ENCODE measurements at regions of chr7 and their contacts with region 1.

Region 1: DNA sequence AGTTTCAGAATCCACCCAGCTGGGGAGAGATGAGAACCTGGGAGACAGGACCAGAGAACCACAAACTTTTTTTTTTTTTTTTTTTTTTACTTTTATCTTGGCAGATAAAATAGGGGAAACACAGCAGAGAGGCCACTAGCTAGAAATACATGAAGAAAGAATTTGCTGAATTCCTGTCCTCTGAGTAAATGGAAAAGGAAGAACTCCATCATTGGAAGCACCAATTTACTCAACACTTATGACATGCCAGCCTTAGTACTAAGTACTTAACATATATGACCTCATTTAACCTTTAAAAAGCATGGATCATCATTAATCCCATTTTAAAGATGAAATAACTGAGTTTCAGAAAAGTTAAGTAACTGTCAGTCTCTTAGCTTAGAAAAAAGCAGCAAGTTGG is 343.0 kb upstream of the NPSR1 start:
- DNase-seq: peak; percentile 47
- H3K4me3 ChIP-seq: no peak overlapping the region
- H3K27ac ChIP-seq: no peak overlapping the region
- H3K4me1 ChIP-seq: no peaks in the 10 kb centered on the region
- H3K27me3 ChIP-seq: no peaks in the 10 kb centered on the region
- CTCF ChIP-seq: no peak

Region 2: DNA sequence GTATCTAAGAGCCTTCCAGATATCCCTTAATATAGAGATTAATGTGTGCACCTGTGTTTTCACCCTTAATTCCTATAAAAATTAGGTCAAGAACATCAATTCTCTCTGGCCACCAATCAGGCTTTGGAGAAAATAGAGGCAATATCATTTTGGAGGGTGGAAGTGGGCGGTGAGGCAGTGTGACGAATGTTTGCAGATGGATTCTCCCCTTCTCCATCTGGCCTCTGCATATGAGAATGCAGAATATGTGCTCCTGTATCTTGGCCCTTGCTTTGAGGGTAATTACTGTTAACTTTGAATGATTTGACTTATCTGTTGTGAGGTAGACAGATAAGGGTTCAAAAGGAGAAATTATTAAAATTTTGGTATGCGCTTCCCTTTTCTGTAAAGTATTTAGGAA is 39.0 kb after region 1 on chr7:
- CTCF ChIA-PET with region 1: no interaction called
- dilution Hi-C with region 1: no loop called
- in situ Hi-C with region 1: no loop called
- intact Hi-C with region 1: no loop called
- DNase-seq: no peak
- H3K4me3 ChIP-seq: no peak overlapping the region
- H3K27ac ChIP-seq: no peak overlapping the region
- H3K4me1 ChIP-seq: peaks cover 31% of the 10 kb centered on the region
- H3K27me3 ChIP-seq: no peaks in the 10 kb centered on the region
- CTCF ChIP-seq: no peak

Region 3: GRCh38 chr7:34425187-34425586 is 110.2 kb after region 1 on chr7:
- CTCF ChIA-PET with region 1: no interaction called
- dilution Hi-C with region 1: no loop called
- in situ Hi-C with region 1: loop called in 1 of 2 experiments (anchors 10 kb)
- intact Hi-C with region 1: no loop called
- DNase-seq: no peak
- H3K4me3 ChIP-seq: no peak overlapping the region
- H3K27ac ChIP-seq: no peak overlapping the region
- H3K4me1 ChIP-seq: no peaks in the 10 kb centered on the region
- H3K27me3 ChIP-seq: no peaks in the 10 kb centered on the region
- CTCF ChIP-seq: no peak

Measured in mammary epithelial cell (primary cell).